Activated T-helper 2 cell treated with anti-CD3 and anti-CD28 coated beads, Interferon-gamma antibody, Interleukin-2, Interleukin-4, amounts not matched to agents 10 μg/mL and 5 μg/mL and 100 μg/mL, durations not matched to agents 14 hours and 24 hours and 36 hours (primary cell): ENCODE measurements at regions of chr21 and their contacts with region 1.

Region 1: GRCh38 chr21:44911389-44912157 is 9.1 kb downstream of the ITGB2 start:
- DNase-seq: peak; percentile 55
- H3K4me3 Mint-ChIP-seq: peak overlapping the region; percentile 70
- H3K27ac Mint-ChIP-seq: peak overlapping the region; percentile 70
- H3K4me1 Mint-ChIP-seq: peaks cover 51% of the 10 kb centered on the region
- H3K27me3 Mint-ChIP-seq: no peaks in the 10 kb centered on the region

Region 2: DNA sequence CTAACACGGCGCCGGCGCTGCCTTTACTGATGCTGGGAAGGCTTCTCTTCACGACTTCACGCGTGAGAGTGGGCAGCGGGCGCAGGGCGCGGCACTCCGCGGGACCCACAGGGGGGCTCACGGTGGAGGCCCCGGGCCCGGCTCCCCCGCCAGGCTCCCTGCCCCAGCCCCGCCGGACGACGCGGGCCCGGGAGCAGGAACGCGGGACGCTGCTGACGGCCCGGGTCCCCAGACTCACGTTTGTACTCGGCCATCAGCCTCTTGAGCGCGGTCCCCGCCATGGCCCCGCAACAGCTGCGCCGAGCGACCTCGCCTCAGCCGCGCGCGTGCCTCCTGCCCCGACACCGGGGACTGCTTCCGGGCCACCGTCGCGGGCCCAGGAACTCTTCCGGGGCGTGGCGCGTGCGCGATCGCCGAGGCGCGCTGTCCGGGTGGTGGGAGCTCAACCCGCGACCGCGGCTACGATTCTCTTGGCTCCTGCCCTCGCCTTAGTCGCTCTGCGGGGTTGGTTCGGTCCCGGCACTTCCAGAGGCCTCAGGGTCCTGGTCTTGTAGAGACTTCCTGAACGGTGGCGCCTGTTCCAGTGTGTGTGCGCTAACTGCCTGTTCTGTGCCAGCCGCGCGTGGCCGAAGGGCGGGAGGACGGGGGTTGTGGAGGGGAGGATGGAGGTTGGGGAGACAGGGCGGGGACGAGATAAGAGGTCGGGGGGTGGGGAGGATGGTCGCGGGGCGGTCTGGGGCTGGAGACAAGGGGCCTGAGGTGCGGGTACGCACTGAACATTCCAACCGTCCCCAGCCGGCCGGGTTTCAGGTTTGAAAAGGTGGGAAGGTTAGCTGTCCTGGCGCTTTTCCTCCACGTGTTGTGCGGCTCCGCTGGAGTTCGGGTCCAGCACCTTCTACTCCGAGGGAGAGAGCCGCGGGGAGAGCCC is 109.8 kb before region 1 on chr21 and contains the start of gene UBE2G2:
- intact Hi-C with region 1: loop called (anchors 5 kb)
- DNase-seq: peak; percentile 86
- H3K4me3 Mint-ChIP-seq: peak within 1 kb of the TSS; percentile 98
- H3K27ac Mint-ChIP-seq: peak within 1 kb of the TSS; percentile 85
- H3K4me1 Mint-ChIP-seq: peaks cover 43% of the 10 kb centered on the region
- H3K27me3 Mint-ChIP-seq: no peaks in the 10 kb centered on the region
- total RNA-seq, gene UBE2G2: 118 and 119 TPM in 2 replicates

Region 3: GRCh38 chr21:44927587-44928461 is 16.3 kb after region 1 on chr21:
- intact Hi-C with region 1: loop called (anchors 1 kb)
- DNase-seq: peak; percentile 65
- H3K4me3 Mint-ChIP-seq: peak overlapping the region; percentile 74
- H3K27ac Mint-ChIP-seq: peak overlapping the region; percentile 96
- H3K4me1 Mint-ChIP-seq: peaks cover 70% of the 10 kb centered on the region
- H3K27me3 Mint-ChIP-seq: no peaks in the 10 kb centered on the region

Region 4: GRCh38 chr21:45427331-45428271 is 516.0 kb after region 1 on chr21:
- intact Hi-C with region 1: no loop called
- DNase-seq: no peak
- H3K4me3 Mint-ChIP-seq: no peak overlapping the region
- H3K27ac Mint-ChIP-seq: no peak overlapping the region
- H3K4me1 Mint-ChIP-seq: no peaks in the 10 kb centered on the region
- H3K27me3 Mint-ChIP-seq: no peaks in the 10 kb centered on the region